Activated B cell treated with CpG ODN at 0.5 μM for 24 hours (primary cell): ENCODE measurements at regions of chr7 and their contacts with region 1.

Region 1: DNA sequence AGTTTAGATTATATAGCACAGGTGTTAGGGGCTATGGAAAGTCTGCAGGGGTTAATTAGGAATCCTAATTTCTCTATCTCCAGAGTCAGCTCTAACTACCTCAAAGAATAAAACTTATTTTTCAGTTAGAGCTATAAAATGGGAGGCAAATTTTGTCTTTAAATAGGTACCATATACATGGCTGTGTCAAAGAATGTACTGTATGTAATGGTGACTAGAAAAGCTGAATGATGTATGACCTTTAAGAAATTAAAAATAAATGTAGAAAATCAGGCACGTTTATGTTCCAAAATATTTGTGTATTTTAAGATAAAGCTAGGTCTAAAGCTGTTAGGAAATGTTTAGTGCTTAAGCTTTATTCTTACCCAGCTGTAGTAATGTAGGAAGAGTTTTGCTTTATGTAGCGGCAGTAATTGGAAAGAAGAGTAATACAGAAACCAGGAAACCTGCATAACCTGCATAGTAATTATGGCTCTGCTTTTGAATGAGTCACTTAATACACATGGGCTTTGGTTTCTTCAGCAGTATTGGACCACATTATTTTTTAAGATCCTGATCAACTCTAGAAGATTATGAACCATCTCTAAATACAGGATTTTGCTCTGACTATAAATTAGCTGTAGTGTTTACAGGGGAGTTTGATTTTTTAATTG is 85.0 kb downstream of the KMT2E start:
- DNase-seq: no peak
- ATAC-seq: peak; percentile 85
- H3K4me3 Mint-ChIP-seq: no peak overlapping the region
- H3K27ac Mint-ChIP-seq: peak overlapping the region; percentile 73
- H3K4me1 Mint-ChIP-seq: peaks cover 28% of the 10 kb centered on the region
- H3K27me3 Mint-ChIP-seq: no peaks in the 10 kb centered on the region
- CTCF ChIP-seq: no peak

Region 2: GRCh38 chr7:105067691-105068090 is 31.3 kb before region 1 on chr7:
- CTCF ChIA-PET with region 1: no interaction called
- POLR2A ChIA-PET with region 1: no interaction called
- intact Hi-C with region 1: loop called (anchors 5 kb)
- DNase-seq: no peak
- ATAC-seq: no peak
- H3K4me3 Mint-ChIP-seq: no peak overlapping the region
- H3K27ac Mint-ChIP-seq: no peak overlapping the region
- H3K4me1 Mint-ChIP-seq: no peaks in the 10 kb centered on the region
- H3K27me3 Mint-ChIP-seq: no peaks in the 10 kb centered on the region
- CTCF ChIP-seq: no peak

Region 3: DNA sequence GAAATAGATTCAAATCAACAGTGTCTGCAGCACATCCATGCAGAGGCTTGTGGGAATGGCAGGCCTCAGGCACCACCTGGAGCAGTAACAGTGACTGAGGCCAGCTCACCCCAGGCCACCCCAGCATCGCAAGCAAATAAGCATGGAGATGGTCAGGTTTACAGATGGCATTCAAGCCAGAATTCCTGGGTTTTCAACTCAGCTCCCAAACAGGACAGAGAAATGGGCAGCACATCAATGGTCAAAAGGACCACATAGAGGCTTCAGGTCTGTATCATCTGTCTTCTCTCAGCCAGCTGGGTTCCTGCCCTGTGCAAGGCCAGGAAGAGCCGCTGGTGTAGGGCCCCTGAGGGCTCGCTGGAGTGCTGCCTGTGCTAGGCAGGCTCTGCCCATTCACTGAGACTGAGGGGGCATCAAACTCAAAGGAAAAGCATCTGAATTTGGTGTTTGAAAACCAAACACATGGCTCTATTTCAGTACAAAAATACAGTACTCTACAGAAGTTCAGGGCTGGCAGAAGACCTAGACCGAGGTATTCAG is 27.5 kb after region 1 on chr7:
- CTCF ChIA-PET with region 1: no interaction called
- POLR2A ChIA-PET with region 1: interaction called, 10 read pairs
- intact Hi-C with region 1: no loop called
- DNase-seq: no peak
- ATAC-seq: no peak
- H3K4me3 Mint-ChIP-seq: no peak overlapping the region
- H3K27ac Mint-ChIP-seq: no peak overlapping the region
- H3K4me1 Mint-ChIP-seq: peaks cover 5% of the 10 kb centered on the region
- H3K27me3 Mint-ChIP-seq: no peaks in the 10 kb centered on the region
- CTCF ChIP-seq: no peak